ENCODE measurements at regions of chr6 and their contacts with region 1.

Region 1: GRCh38 chr6:45411959-45412358 is 34.2 kb upstream of the SUPT3H start:
- DNase-seq: no peak
- H3K4me3 ChIP-seq: no peak overlapping the region
- H3K4me3 Mint-ChIP-seq: no peak overlapping the region
- H3K27ac ChIP-seq: no peak overlapping the region
- H3K27ac Mint-ChIP-seq: no peak overlapping the region
- H3K4me1 ChIP-seq: no peaks in the 10 kb centered on the region
- H3K4me1 Mint-ChIP-seq: no peaks in the 10 kb centered on the region
- H3K27me3 ChIP-seq: no peaks in the 10 kb centered on the region
- H3K27me3 Mint-ChIP-seq: peaks cover 2 to 15% of the 10 kb centered on the region in 2 donors

Region 2: DNA sequence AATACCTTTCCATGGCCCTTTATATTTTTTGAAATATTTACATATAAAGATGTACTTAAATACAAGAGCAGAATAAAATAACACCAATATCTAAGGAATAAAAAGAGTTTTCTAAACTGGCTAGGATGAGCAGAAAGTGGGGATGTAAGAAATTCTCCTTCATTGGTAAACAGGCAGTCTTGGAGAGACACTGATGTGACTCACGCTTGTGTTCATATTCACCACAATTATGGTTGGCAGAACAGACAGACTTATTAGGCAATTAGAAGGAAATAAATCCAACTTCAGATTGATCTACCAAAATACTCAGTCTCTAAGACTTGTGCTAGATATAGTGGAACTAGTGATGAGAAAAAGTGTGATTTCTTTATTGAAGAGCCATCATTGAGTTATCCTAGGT is 560.8 kb before region 1 on chr6:
- CTCF ChIA-PET with region 1: no interaction called
- POLR2A ChIA-PET with region 1: interaction called, 11 read pairs
- DNase-seq: no peak
- H3K4me3 ChIP-seq: no peak overlapping the region
- H3K4me3 Mint-ChIP-seq: no peak overlapping the region
- H3K27ac ChIP-seq: no peak overlapping the region
- H3K27ac Mint-ChIP-seq: no peak overlapping the region
- H3K4me1 ChIP-seq: no peaks in the 10 kb centered on the region
- H3K4me1 Mint-ChIP-seq: peaks cover 9 to 22% (median 20%) of the 10 kb centered on the region in 3 donors
- H3K27me3 ChIP-seq: no peaks in the 10 kb centered on the region
- H3K27me3 Mint-ChIP-seq: peaks cover 0 to 2% of the 10 kb centered on the region in 2 donors

Measured in CD8-positive, alpha-beta memory T cell (primary cell).